CD4-positive, alpha-beta T cell (primary cell): ENCODE measurements at regions of chr1 and their contacts with region 1.

Region 1: GRCh38 chr1:75785983-75786853 is at the start of gene RABGGTB:
- DNase-seq: peak; percentile 89 to 97 (median 92)
- ATAC-seq: peak; percentile 95
- H3K4me3 ChIP-seq: peak within 1 kb of the TSS; percentile 67
- H3K4me3 Mint-ChIP-seq: peak within 1 kb of the TSS; percentile 98
- H3K27ac ChIP-seq: peak within 1 kb of the TSS; percentile 84 to 86
- H3K27ac Mint-ChIP-seq: peak within 1 kb of the TSS; percentile 92
- H3K4me1 ChIP-seq: peaks cover 26% of the 10 kb centered on the region
- H3K4me1 Mint-ChIP-seq: peaks cover 57% of the 10 kb centered on the region
- H3K27me3 ChIP-seq: no peaks in the 10 kb centered on the region
- H3K27me3 Mint-ChIP-seq: no peaks in the 10 kb centered on the region
- CTCF ChIP-seq: no peak
- total RNA-seq, gene RABGGTB: 199 to 200 TPM

Region 2: GRCh38 chr1:76053021-76053420 is 266.8 kb after region 1 on chr1:
- CTCF ChIA-PET with region 1: no interaction called
- POLR2A ChIA-PET with region 1: no interaction called
- intact Hi-C with region 1: no loop called
- DNase-seq: no peak
- ATAC-seq: no peak
- H3K4me3 ChIP-seq: no peak overlapping the region
- H3K4me3 Mint-ChIP-seq: no peak overlapping the region
- H3K27ac ChIP-seq: no peak overlapping the region
- H3K27ac Mint-ChIP-seq: no peak overlapping the region
- H3K4me1 ChIP-seq: no peaks in the 10 kb centered on the region
- H3K4me1 Mint-ChIP-seq: no peaks in the 10 kb centered on the region
- H3K27me3 ChIP-seq: peaks cover 0 to 5% of the 10 kb centered on the region in 2 experiments
- H3K27me3 Mint-ChIP-seq: peaks cover 10% of the 10 kb centered on the region
- CTCF ChIP-seq: no peak

Region 3: GRCh38 chr1:77779529-77780281 is 1993.5 kb after region 1 on chr1 and contains the start of gene MIGA1:
- CTCF ChIA-PET with region 1: no interaction called
- POLR2A ChIA-PET with region 1: no interaction called
- intact Hi-C with region 1: loop called (anchors 5 to 10 kb)
- DNase-seq: peak; percentile 78 to 96 (median 84)
- ATAC-seq: peak; percentile 98
- H3K4me3 ChIP-seq: peak within 1 kb of the TSS; percentile 96
- H3K4me3 Mint-ChIP-seq: peak within 1 kb of the TSS; percentile 97
- H3K27ac ChIP-seq: peak within 1 kb of the TSS; percentile 32 to 55
- H3K27ac Mint-ChIP-seq: peak within 1 kb of the TSS; percentile 89
- H3K4me1 ChIP-seq: peaks cover 14% of the 10 kb centered on the region
- H3K4me1 Mint-ChIP-seq: peaks cover 43% of the 10 kb centered on the region
- H3K27me3 ChIP-seq: no peaks in the 10 kb centered on the region
- H3K27me3 Mint-ChIP-seq: no peaks in the 10 kb centered on the region
- CTCF ChIP-seq: no peak
- total RNA-seq, gene MIGA1: 12.2 to 15.8 TPM